T-cell (primary cell): ENCODE measurements at regions of chr9 and their contacts with region 1.

Region 1: DNA sequence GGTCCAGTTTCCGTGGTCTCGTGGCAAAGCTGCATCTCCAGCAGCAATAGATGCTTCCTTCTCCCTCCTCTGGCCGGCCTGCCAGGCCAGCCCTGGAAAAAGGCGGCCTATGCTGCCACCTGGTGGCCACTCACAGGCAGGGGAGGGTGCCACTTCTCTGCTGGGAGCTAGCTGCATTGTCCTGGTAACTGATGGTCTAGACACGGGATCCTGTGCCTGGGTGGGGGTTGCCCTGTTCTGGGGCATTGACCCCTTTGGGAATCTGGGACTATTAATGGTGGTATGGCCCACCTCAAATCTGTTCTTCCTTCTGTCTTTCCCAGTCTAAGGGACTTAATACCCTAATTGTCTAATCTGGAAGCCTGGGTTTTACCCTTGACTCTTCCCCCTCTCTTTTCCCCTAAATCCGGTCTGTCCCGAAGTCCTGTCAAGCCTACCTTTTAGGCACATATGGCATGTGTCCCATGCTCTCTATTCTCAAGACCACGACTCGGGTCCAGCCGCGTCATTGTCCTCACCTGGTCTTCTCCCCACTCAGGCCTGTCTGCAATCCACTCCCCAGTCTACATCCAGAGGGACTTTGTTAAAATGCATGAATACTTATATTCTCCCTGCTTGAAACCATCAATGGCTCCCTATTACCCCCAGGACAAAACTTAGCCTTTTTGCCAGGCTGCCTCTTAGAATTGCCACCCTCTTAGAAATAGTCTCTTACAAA is 20.0 kb upstream of the PTGS1 start:
- DNase-seq: peak; percentile 33 to 81 (median 65)
- ATAC-seq: peak; percentile 76 to 85 (median 78)
- H3K4me3 ChIP-seq: no peak overlapping the region
- H3K4me3 Mint-ChIP-seq: no peak overlapping the region
- H3K27ac ChIP-seq: no peak overlapping the region
- H3K27ac Mint-ChIP-seq: no peak overlapping the region
- H3K4me1 ChIP-seq: peaks cover 0 to 15% of the 10 kb centered on the region in 2 experiments
- H3K4me1 Mint-ChIP-seq: peaks cover 10 to 22% (median 19%) of the 10 kb centered on the region in 3 donors
- H3K27me3 ChIP-seq: peaks cover 0 to 55% of the 10 kb centered on the region in 2 experiments
- H3K27me3 Mint-ChIP-seq: peaks cover 16 to 47% of the 10 kb centered on the region in 2 donors

Region 2: GRCh38 chr9:122099271-122099869 is 251.4 kb before region 1 on chr9:
- CTCF ChIA-PET with region 1: interaction called, 9 to 42 read pairs
- POLR2A ChIA-PET with region 1: interaction called in 1 of 2 experiments, 4 read pairs
- DNase-seq: peak; percentile 44 to 88 (median 73)
- ATAC-seq: peak; percentile 76 to 92 (median 84)
- H3K4me3 ChIP-seq: no peak overlapping the region
- H3K4me3 Mint-ChIP-seq: peak overlapping the region in 2 of 3 donors; percentile 22 to 34
- H3K27ac ChIP-seq: no peak overlapping the region
- H3K27ac Mint-ChIP-seq: no peak overlapping the region
- H3K4me1 ChIP-seq: peaks cover 0 to 12% of the 10 kb centered on the region in 2 experiments
- H3K4me1 Mint-ChIP-seq: peaks cover 13 to 16% (median 14%) of the 10 kb centered on the region in 3 donors
- H3K27me3 ChIP-seq: peaks cover 2 to 22% of the 10 kb centered on the region in 2 experiments
- H3K27me3 Mint-ChIP-seq: peaks cover 9 to 10% of the 10 kb centered on the region in 2 donors

Region 3: DNA sequence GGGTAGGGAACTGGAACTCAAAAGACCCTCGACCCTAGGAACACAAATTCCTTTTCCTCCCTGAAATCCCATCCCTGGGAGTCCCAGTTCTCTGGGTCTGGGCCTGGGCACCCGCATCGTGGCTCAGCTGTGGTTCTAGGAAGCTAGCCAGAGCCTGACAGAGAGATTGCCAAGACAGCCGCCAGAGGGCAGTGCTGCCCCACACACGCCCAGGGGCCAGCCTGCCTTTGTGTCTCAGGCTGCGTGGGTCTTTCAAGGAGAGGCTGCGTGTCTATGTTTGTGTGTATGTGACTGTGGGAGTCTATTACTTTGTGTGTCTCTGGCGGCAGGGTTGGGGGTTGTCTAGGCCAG is 225.7 kb before region 1 on chr9:
- CTCF ChIA-PET with region 1: interaction called, 16 to 19 read pairs
- POLR2A ChIA-PET with region 1: no interaction called
- DNase-seq: peak; percentile 45 to 85 (median 72)
- ATAC-seq: peak; percentile 73 to 86 (median 77)
- H3K4me3 ChIP-seq: no peak overlapping the region
- H3K4me3 Mint-ChIP-seq: peak overlapping the region; percentile 35 to 62 (median 40)
- H3K27ac ChIP-seq: no peak overlapping the region
- H3K27ac Mint-ChIP-seq: no peak overlapping the region
- H3K4me1 ChIP-seq: peaks cover 0 to 44% of the 10 kb centered on the region in 2 experiments
- H3K4me1 Mint-ChIP-seq: peaks cover 15 to 45% (median 19%) of the 10 kb centered on the region in 3 donors
- H3K27me3 ChIP-seq: peaks cover 0 to 77% of the 10 kb centered on the region in 2 experiments
- H3K27me3 Mint-ChIP-seq: peaks cover 22 to 28% of the 10 kb centered on the region in 2 donors